ENCODE measurements at regions of chr11 and their contacts with region 1.

Region 1: GRCh38 chr11:7098235-7098832 is 9.5 kb downstream of the RBMXL2 start:
- DNase-seq: no peak
- ATAC-seq: no peak
- H3K4me3 ChIP-seq: no peak overlapping the region
- H3K27ac ChIP-seq: no peak overlapping the region
- H3K4me1 ChIP-seq: no peaks in the 10 kb centered on the region
- H3K27me3 ChIP-seq: no peaks in the 10 kb centered on the region

Region 2: GRCh38 chr11:7688238-7688826 is 590.0 kb after region 1 on chr11:
- intact Hi-C with region 1: loop called in 1 of 2 experiments (anchors 10 kb)
- DNase-seq: no peak
- ATAC-seq: no peak
- H3K4me3 ChIP-seq: no peak overlapping the region
- H3K27ac ChIP-seq: no peak overlapping the region
- H3K4me1 ChIP-seq: peaks cover 0 to 3% of the 10 kb centered on the region in 2 donors
- H3K27me3 ChIP-seq: no peaks in the 10 kb centered on the region

Measured in aorta (tissue), 5 donors.